CD8-positive, alpha-beta T cell (primary cell): ENCODE measurements at regions of chr6 and their contacts with region 1.

Region 1: DNA sequence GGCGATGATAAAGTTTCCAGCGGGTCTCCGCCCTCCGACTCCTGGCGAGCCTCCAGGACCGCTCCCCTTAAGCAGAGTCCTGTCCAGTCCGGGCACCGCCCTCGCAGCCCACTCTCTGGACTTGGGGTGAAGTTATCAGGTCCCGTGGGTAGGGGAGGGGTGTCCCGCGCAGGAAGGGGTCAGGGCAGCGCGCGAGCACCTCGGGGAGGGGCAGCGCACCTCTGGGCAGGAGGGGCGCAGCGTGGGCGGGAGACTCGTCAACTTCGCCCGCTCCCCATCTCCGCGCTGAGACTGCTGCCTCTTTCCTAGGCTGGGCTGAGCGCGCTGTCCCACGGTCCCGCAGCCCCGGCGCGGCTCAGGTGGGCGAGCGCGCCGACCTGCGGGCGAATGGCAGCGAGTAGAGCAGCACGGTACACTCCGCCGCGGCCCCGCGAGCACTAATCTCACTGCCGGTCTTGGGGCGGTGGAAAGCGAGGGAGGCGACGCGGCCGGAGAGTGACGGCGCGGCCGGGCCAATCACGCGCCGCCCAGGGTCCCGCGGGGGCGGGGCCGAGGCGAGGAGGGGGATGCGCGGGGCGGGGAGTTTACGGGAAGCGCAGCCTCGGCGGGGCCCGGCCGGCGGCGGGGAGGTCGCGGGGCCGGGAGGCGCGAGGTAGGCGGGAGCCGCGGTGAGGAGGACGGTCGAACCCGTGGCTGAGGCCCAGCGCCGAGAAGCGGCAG is at the start of gene MAN1A1:
- DNase-seq: peak; percentile 79 to 94 (median 88)
- ATAC-seq: peak; percentile 86
- H3K4me3 ChIP-seq: peak within 1 kb of the TSS; percentile 91 to 92
- H3K4me3 Mint-ChIP-seq: peak within 1 kb of the TSS; percentile 90
- H3K27ac ChIP-seq: peak within 1 kb of the TSS; percentile 65 to 67
- H3K27ac Mint-ChIP-seq: peak within 1 kb of the TSS; percentile 88
- H3K4me1 ChIP-seq: peaks cover 30% of the 10 kb centered on the region
- H3K4me1 Mint-ChIP-seq: peaks cover 45% of the 10 kb centered on the region
- H3K27me3 ChIP-seq: no peaks in the 10 kb centered on the region
- H3K27me3 Mint-ChIP-seq: no peaks in the 10 kb centered on the region
- CTCF ChIP-seq: no peak
- total RNA-seq, gene MAN1A1: 8.4 to 8.5 TPM

Region 2: DNA sequence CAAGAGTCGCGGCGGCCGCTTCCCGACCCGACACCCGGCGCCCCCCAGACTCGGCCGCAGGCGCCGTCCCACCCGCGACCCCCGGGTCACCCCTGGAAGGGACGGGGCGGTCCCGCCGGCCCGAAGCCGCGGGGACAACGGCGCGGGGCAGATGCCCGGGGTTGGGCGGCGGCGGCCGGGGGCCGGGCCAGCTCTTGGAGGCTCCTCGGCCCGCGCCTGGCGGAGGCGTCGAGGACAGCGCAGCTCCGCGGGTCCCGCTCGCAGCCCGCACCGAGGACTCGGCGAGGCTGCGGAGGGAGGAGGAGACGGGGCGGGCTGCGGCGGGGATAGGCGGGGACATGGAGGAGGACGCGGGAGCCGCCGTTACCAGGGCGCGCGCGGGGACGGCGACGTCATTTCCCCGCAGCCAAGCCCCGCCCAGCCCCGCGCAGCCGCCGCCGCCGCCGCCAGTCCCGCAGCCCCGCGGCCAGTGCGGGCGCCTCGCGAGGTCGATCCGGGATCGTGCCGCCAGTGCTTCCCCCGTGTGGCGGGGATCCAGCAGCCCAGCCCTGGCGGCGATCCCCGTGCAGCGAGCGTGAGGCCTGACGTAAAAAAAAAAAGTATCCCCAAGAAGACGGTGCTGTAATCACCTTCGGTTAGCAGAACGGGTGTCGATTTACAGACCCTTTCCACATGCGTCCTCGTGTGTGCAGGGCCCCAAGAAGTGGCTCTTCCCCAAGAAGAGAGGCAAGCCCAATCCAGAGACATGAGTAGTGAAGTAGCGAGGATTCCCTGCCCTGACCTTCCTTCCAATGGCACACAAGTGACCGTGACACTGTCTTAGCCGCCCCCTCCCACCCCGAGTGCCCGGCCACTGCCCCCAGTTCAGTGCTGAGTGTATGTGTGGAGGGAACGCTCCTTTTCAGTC is 270.9 kb before region 1 on chr6 and contains the start of gene FAM184A:
- CTCF ChIA-PET with region 1: no interaction called
- POLR2A ChIA-PET with region 1: interaction called, 4 read pairs
- intact Hi-C with region 1: loop called (anchors 5 to 10 kb)
- DNase-seq: peak; percentile 50 to 86 (median 71)
- ATAC-seq: peak; percentile 74
- H3K4me3 ChIP-seq: peak within 1 kb of the TSS; percentile 58 to 66
- H3K4me3 Mint-ChIP-seq: peak within 1 kb of the TSS; percentile 94
- H3K27ac ChIP-seq: peak within 1 kb of the TSS; percentile 34 to 46
- H3K27ac Mint-ChIP-seq: peak within 1 kb of the TSS; percentile 91
- H3K4me1 ChIP-seq: peaks cover 25% of the 10 kb centered on the region
- H3K4me1 Mint-ChIP-seq: peaks cover 32% of the 10 kb centered on the region
- H3K27me3 ChIP-seq: no peaks in the 10 kb centered on the region
- H3K27me3 Mint-ChIP-seq: no peaks in the 10 kb centered on the region
- CTCF ChIP-seq: no peak
- total RNA-seq, gene FAM184A: 0.50 to 0.79 TPM

Region 3: GRCh38 chr6:119313937-119314884 is 35.3 kb before region 1 on chr6:
- CTCF ChIA-PET with region 1: interaction called, 3 read pairs
- POLR2A ChIA-PET with region 1: interaction called, 24 read pairs
- intact Hi-C with region 1: loop called in 1 of 2 experiments (anchors 1 kb)
- DNase-seq: peak in 6 of 9 experiments; percentile 28 to 84 (median 60)
- ATAC-seq: peak; percentile 74
- H3K4me3 ChIP-seq: peak overlapping the region; percentile 2 to 7
- H3K4me3 Mint-ChIP-seq: peak overlapping the region; percentile 57
- H3K27ac ChIP-seq: peak overlapping the region; percentile 37 to 88
- H3K27ac Mint-ChIP-seq: peak overlapping the region; percentile 89
- H3K4me1 ChIP-seq: peaks cover 36% of the 10 kb centered on the region
- H3K4me1 Mint-ChIP-seq: peaks cover 60% of the 10 kb centered on the region
- H3K27me3 ChIP-seq: no peaks in the 10 kb centered on the region
- H3K27me3 Mint-ChIP-seq: no peaks in the 10 kb centered on the region
- CTCF ChIP-seq: no peak

Region 4: DNA sequence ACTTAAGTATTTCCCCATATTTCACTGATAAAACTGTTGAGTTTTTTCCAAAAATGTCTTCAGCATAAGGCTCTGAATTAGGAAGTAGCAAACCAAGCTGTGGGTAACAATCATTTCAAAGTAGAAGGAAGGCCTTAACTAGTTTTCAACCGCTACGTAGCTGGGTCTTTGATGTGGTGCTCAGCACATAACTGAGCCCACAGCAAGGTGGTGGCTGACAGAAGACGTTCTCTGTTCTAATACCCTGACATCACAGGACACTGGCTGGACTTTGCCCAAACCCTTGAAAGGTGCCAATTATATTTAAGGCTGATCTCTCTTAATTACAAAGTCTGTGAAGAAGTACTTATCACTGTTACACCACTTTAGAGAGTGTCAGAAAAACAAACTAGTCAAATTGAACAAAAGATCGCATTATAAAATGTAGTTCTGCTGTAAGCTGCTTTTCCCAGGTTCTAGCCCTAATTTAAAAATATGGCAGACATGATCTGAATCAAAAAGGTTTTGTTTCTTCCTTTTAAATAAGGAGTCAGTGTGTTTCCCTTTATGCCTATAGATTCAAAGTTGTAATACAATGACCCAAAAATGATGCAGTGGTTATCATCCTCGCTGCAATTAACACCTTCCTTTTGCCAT is 26.6 kb before region 1 on chr6:
- CTCF ChIA-PET with region 1: no interaction called
- POLR2A ChIA-PET with region 1: interaction called, 13 read pairs
- intact Hi-C with region 1: loop called in 1 of 2 experiments (anchors 2 kb)
- DNase-seq: peak in 6 of 9 experiments; percentile 47 to 87 (median 68)
- ATAC-seq: peak; percentile 93
- H3K4me3 ChIP-seq: no peak overlapping the region
- H3K4me3 Mint-ChIP-seq: peak overlapping the region; percentile 49
- H3K27ac ChIP-seq: peak overlapping the region in 1 of 2 experiments; percentile 38
- H3K27ac Mint-ChIP-seq: peak overlapping the region; percentile 41
- H3K4me1 ChIP-seq: peaks cover 18% of the 10 kb centered on the region
- H3K4me1 Mint-ChIP-seq: peaks cover 21% of the 10 kb centered on the region
- H3K27me3 ChIP-seq: no peaks in the 10 kb centered on the region
- H3K27me3 Mint-ChIP-seq: no peaks in the 10 kb centered on the region
- CTCF ChIP-seq: no peak

Region 5: GRCh38 chr6:121334299-121335086 is 1985.0 kb after region 1 on chr6 and contains the start of gene TBC1D32:
- CTCF ChIA-PET with region 1: no interaction called
- POLR2A ChIA-PET with region 1: no interaction called
- intact Hi-C with region 1: loop called (anchors 1 to 10 kb)
- DNase-seq: peak; percentile 71 to 94 (median 86)
- ATAC-seq: peak; percentile 88
- H3K4me3 ChIP-seq: peak within 1 kb of the TSS; percentile 86 to 87
- H3K4me3 Mint-ChIP-seq: peak within 1 kb of the TSS; percentile 93
- H3K27ac ChIP-seq: peak within 1 kb of the TSS; percentile 99
- H3K27ac Mint-ChIP-seq: peak within 1 kb of the TSS; percentile 98
- H3K4me1 ChIP-seq: peaks cover 23% of the 10 kb centered on the region
- H3K4me1 Mint-ChIP-seq: peaks cover 35% of the 10 kb centered on the region
- H3K27me3 ChIP-seq: no peaks in the 10 kb centered on the region
- H3K27me3 Mint-ChIP-seq: no peaks in the 10 kb centered on the region
- CTCF ChIP-seq: no peak
- total RNA-seq, gene TBC1D32: 6.0 to 7.4 TPM